H1 (cell line): ENCODE measurements at regions of chr7 and their contacts with region 1.

Region 1: GRCh38 chr7:33716581-33717477 is 188.5 kb upstream of the BMPER start:
- DNase-seq: no peak
- H3K4me3 ChIP-seq: no peak overlapping the region
- H3K27ac ChIP-seq: no peak overlapping the region
- H3K4me1 ChIP-seq: no peaks in the 10 kb centered on the region; a peak in 1 of 7 replicates
- H3K27me3 ChIP-seq: no peaks in the 10 kb centered on the region
- CTCF ChIP-seq: peak in 2 of 3 experiments; percentile 35 to 76; a peak in 3 of 4 replicates
- EP300 ChIP-seq: no peak
- POLR2A ChIP-seq: no peak
- RAD21 ChIP-seq: peak; percentile 42 to 53; a peak in 3 of 4 replicates

Region 2: GRCh38 chr7:33471636-33472242 is 245.1 kb before region 1 on chr7:
- CTCF ChIA-PET with region 1: no interaction called
- POLR2A ChIA-PET with region 1: no interaction called
- DNase-seq: no peak
- H3K4me3 ChIP-seq: no peak overlapping the region
- H3K27ac ChIP-seq: no peak overlapping the region
- H3K4me1 ChIP-seq: peaks cover 0 to 4% (median 0%) of the 10 kb centered on the region in 4 experiments; a peak in 2 of 7 replicates
- H3K27me3 ChIP-seq: no peaks in the 10 kb centered on the region
- CTCF ChIP-seq: no peak
- EP300 ChIP-seq: no peak
- POLR2A ChIP-seq: no peak
- RAD21 ChIP-seq: no peak

Region 3: GRCh38 chr7:33706771-33707200 is 10.0 kb before region 1 on chr7:
- CTCF ChIA-PET with region 1: interaction called, 17 read pairs
- POLR2A ChIA-PET with region 1: interaction called, 3 read pairs
- DNase-seq: no peak
- H3K4me3 ChIP-seq: no peak overlapping the region
- H3K27ac ChIP-seq: no peak overlapping the region
- H3K4me1 ChIP-seq: peaks cover 6 to 32% (median 23%) of the 10 kb centered on the region in 4 experiments
- H3K27me3 ChIP-seq: peaks cover 2 to 10% (median 5%) of the 10 kb centered on the region in 4 experiments; a peak in 5 of 7 replicates
- CTCF ChIP-seq: no peak
- EP300 ChIP-seq: no peak
- POLR2A ChIP-seq: no peak
- RAD21 ChIP-seq: no peak